PC-9 (cell line): ENCODE measurements at regions of chr13 and their contacts with region 1.

Region 1: DNA sequence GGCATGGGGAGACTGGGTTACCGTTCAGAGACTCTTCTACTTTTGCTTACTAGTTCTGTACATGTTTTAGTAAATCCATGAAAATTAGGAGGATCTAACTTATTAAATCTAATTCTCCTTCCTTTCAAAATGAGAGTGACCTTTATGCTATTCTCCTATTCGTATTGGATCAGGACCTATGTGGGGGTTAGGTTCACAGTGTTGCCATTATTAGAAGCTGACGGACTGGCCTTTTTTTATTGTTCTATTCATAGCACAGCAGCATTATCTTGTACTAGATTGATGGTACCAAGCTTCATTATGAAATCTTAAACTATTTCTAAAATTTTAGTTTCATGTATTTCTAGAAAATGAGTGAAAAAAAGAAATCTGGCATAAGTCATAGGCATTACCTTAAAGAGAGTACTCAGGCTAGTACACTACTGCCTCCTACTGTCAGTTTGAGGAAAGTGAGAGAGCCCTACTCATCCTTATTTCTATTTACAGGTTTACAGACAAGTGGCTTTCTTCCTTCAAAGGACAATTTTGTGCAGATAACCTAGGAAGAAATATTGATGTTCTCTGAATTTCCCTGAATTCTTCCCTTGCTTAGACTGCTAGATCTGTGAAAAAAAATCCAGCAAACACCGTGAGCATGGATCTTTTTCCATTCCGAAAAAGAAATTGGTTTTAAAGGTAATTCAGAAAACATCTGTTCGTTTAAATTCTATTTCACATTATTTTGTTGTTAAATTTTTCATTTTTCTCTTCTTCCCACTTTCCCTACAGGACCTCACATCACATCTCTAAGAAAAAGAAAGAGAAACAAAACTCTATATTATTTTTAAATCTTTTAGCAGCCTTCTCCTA is 485.5 kb downstream of the DIAPH3 start:
- DNase-seq: no peak
- H3K4me3 ChIP-seq: no peak overlapping the region
- H3K27ac ChIP-seq: no peak overlapping the region
- H3K4me1 ChIP-seq: no peaks in the 10 kb centered on the region
- H3K27me3 ChIP-seq: no peaks in the 10 kb centered on the region
- CTCF ChIP-seq: peak; percentile 69

Region 2: DNA sequence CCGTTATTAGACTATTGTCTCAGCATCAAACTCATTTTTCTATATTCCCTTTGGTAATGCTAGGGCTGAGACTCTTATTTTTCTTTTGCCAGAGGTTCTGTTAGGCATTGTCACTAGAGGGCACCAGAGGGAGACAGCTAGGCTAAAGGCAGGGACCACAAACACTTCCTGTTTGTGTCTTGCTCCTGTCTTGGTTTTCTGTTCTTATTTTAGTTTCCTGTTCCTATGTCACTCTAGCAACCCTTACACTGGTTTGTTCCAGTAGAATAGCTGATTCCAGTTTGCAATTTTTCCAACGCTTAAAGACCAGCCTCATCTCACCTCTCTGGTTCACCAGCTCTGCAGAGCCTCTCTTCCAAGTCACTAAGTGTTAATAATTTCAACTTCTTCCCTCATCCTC is 286.5 kb before region 1 on chr13:
- CTCF ChIA-PET with region 1: no interaction called
- POLR2A ChIA-PET with region 1: no interaction called
- intact Hi-C with region 1: loop called (anchors 10 kb)
- DNase-seq: peak in 1 of 2 experiments; percentile 14
- H3K4me3 ChIP-seq: no peak overlapping the region
- H3K27ac ChIP-seq: no peak overlapping the region
- H3K4me1 ChIP-seq: no peaks in the 10 kb centered on the region
- H3K27me3 ChIP-seq: no peaks in the 10 kb centered on the region
- CTCF ChIP-seq: peak; percentile 76

Region 3: DNA sequence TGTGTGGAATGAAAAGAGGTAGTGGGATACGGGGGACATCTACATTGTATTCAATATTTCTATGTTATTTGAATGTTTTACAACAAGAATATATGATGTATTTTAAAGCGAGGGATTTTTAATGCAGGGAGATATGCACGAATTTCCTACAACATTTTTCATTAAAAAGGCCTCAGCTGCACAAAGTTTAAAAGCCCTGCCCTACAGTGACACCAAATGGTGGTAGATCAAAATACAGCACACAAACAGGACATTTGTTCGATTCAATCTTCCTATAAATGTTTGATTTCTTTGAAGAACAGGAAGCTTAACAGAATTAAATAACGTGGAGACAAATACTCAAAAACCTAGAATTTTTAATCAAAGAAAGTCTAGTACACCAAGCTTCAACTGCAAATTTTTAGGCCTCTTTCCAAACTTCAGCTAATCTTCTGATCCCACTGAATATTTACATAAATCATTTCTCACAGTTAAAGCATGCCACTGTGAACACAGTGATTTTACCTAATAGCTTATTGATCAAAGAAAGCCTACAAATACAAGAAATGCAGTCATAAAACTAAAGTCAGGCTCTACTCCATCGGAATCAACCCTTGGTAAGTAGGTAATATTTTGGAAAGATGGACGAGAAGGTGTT is 228.3 kb after region 1 on chr13:
- CTCF ChIA-PET with region 1: no interaction called
- POLR2A ChIA-PET with region 1: no interaction called
- intact Hi-C with region 1: loop called (anchors 5 kb)
- DNase-seq: no peak
- H3K4me3 ChIP-seq: no peak overlapping the region
- H3K27ac ChIP-seq: no peak overlapping the region
- H3K4me1 ChIP-seq: no peaks in the 10 kb centered on the region
- H3K27me3 ChIP-seq: no peaks in the 10 kb centered on the region
- CTCF ChIP-seq: peak; percentile 74

Region 4: DNA sequence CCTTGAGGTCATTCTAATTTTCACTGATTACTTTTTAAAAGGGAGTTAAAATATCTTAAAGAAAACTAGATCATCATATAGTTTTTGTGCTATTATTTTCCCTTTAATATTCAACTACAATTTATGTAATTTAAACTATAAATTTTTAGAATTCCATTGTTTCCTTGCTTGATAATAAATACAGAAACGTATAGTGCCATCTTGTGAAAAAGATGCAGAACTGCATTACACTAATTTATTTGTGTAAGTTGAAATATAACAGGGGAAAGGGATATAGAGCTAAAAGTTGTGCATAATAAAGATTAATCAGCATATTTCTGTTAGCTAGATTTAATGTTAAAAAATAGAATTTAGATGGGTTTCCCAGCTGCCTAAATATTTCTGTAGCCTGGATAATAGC is 657.3 kb after region 1 on chr13:
- CTCF ChIA-PET with region 1: no interaction called
- POLR2A ChIA-PET with region 1: no interaction called
- intact Hi-C with region 1: loop called (anchors 5 kb)
- DNase-seq: no peak
- H3K4me3 ChIP-seq: no peak overlapping the region
- H3K27ac ChIP-seq: no peak overlapping the region
- H3K4me1 ChIP-seq: no peaks in the 10 kb centered on the region
- H3K27me3 ChIP-seq: no peaks in the 10 kb centered on the region
- CTCF ChIP-seq: peak; percentile 85

Region 5: GRCh38 chr13:60431108-60431700 is 753.0 kb after region 1 on chr13:
- CTCF ChIA-PET with region 1: no interaction called
- POLR2A ChIA-PET with region 1: no interaction called
- intact Hi-C with region 1: loop called (anchors 10 kb)
- DNase-seq: peak in 1 of 2 experiments; percentile 63
- H3K4me3 ChIP-seq: no peak overlapping the region
- H3K27ac ChIP-seq: no peak overlapping the region
- H3K4me1 ChIP-seq: no peaks in the 10 kb centered on the region
- H3K27me3 ChIP-seq: no peaks in the 10 kb centered on the region
- CTCF ChIP-seq: peak; percentile 89